Dorsolateral prefrontal cortex (tissue), 120 donors: ENCODE measurements at regions of chr12 and their contacts with region 1.

Region 1: DNA sequence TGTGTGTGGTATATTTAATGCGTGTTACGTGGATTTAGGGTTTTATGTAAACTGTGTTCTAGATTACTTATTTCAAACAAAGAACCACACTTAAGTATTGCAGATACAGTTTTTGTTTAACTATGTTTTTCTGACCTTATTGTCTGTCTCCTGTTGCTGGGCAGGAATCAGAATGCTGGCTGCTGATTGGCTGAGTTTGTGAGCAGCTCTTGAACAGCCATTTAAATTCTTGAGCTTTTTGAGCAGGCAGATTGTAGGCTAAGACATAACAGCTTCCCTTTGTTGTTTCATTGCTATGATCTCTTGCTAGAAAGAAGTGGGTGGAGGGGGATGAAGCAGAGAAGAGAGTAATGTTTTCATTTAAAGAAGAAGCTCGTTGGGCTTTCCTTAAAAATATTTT is 52.2 kb downstream of the ATF7IP start:
- DNase-seq: peak; percentile 57 to 92 (median 74)
- H3K4me3 ChIP-seq: peak overlapping the region in 54 of 59 donors; percentile 2 to 62 (median 38)
- H3K27ac ChIP-seq: peak overlapping the region in 58 of 59 donors; percentile 5 to 86 (median 69)
- H3K27me3 ChIP-seq: no peaks in the 10 kb centered on the region
- CTCF ChIP-seq: peak in 4 of 56 donors; percentile 16 to 28 (median 23)

Region 2: GRCh38 chr12:14072987-14073386 is 344.7 kb before region 1 on chr12:
- intact Hi-C with region 1: no loop called
- DNase-seq: no peak
- H3K4me3 ChIP-seq: no peak overlapping the region
- H3K27ac ChIP-seq: no peak overlapping the region
- H3K27me3 ChIP-seq: no peaks in the 10 kb centered on the region
- CTCF ChIP-seq: no peak

Region 3: DNA sequence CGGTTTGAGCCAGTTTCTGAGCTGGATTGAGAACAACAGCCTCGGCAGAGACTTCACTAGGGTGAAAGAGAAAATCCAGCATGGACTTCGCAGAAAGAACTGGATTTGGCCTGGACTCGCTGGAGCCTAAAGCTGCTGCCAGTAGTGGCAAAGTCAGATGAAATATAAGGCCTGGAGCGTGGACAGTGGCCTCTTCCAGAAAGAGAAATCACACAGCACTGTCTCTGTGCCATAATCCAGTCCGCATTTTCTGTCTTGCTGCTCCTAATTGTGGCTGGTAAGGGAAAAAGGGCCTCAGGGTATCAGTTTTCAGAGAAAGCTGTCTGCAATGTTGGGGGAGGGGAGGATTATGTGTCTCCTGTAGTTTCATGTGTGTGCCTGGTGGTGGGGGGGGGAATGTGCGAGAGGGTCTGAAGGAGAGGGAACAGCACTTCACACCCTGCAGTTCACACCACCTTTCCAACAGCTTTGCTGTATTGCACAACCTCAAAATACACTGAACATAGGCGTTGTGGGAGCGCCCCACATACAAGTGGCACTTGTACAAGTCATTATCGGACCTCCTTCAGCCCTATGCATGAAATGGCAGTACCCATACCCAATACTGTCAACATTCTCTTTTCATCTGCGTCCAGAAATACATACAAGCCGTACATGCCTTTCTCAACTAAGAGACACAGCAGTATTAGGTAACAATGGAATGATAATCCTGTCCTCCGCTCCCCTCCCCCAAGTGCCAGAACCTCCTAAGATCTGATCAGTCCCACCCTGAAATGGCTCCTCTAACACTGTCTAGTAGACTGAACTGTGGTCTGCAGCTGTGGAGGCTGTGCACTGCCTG is 159.8 kb before region 1 on chr12:
- intact Hi-C with region 1: loop called (anchors 2 to 5 kb)
- DNase-seq: peak in 8 of 10 donors; percentile 81 to 98 (median 88)
- H3K4me3 ChIP-seq: peak overlapping the region in 31 of 59 donors; percentile 1 to 53 (median 34)
- H3K27ac ChIP-seq: peak overlapping the region; percentile 75 to 98 (median 94)
- H3K27me3 ChIP-seq: no peaks in the 10 kb centered on the region
- CTCF ChIP-seq: peak in 11 of 56 donors; percentile 2 to 39 (median 15)